ENCODE measurements at regions of chr10 and their contacts with region 1.

Region 1: GRCh38 chr10:110354322-110354766 is 49.6 kb upstream of the SMNDC1 start:
- DNase-seq: peak; percentile 94
- ATAC-seq: peak; percentile 39
- H3K4me3 Mint-ChIP-seq: peak overlapping the region; percentile 68
- H3K27ac Mint-ChIP-seq: peak overlapping the region; percentile 98
- H3K4me1 Mint-ChIP-seq: peaks cover 67% of the 10 kb centered on the region
- H3K27me3 Mint-ChIP-seq: no peaks in the 10 kb centered on the region

Region 2: DNA sequence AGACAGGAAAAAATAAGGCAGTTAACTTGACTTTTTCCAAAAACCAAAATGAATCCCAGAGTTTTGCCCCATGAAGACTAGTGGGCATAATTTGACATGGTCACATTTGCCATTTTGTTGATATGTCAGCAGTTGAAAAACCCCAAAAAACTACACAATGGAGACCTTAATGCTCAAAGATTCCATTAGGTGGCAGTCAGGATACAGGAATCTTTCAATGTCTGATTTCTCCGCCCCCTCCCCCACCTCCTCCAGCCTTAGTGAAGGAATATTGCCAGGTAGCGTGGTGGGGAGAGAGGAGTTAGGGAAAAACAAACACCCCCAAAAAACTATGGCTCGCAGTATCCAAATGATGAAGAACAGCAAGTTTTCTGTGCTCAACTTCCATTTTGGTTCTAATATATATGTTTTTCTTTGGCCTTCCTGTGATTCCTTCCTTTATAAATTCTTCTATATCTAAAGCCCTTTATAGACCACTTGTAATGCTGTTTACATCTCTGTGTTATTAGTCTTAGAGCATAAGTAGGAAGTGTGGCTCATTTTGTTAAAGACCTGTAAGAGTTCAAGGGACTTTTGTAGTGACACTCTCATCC is 42.9 kb before region 1 on chr10:
- CTCF ChIA-PET with region 1: interaction called, 14 read pairs
- POLR2A ChIA-PET with region 1: no interaction called
- intact Hi-C with region 1: loop called (anchors 1 to 2 kb)
- DNase-seq: peak; percentile 61
- ATAC-seq: peak; percentile 70
- H3K4me3 Mint-ChIP-seq: no peak overlapping the region
- H3K27ac Mint-ChIP-seq: no peak overlapping the region
- H3K4me1 Mint-ChIP-seq: peaks cover 27% of the 10 kb centered on the region
- H3K27me3 Mint-ChIP-seq: peaks cover 2% of the 10 kb centered on the region

Region 3: GRCh38 chr10:110368002-110368401 is 13.7 kb after region 1 on chr10:
- CTCF ChIA-PET with region 1: interaction called, 35 read pairs
- POLR2A ChIA-PET with region 1: interaction called, 8 read pairs
- intact Hi-C with region 1: no loop called
- DNase-seq: peak; percentile 27
- ATAC-seq: no peak
- H3K4me3 Mint-ChIP-seq: no peak overlapping the region
- H3K27ac Mint-ChIP-seq: no peak overlapping the region
- H3K4me1 Mint-ChIP-seq: peaks cover 70% of the 10 kb centered on the region
- H3K27me3 Mint-ChIP-seq: no peaks in the 10 kb centered on the region

Region 4: DNA sequence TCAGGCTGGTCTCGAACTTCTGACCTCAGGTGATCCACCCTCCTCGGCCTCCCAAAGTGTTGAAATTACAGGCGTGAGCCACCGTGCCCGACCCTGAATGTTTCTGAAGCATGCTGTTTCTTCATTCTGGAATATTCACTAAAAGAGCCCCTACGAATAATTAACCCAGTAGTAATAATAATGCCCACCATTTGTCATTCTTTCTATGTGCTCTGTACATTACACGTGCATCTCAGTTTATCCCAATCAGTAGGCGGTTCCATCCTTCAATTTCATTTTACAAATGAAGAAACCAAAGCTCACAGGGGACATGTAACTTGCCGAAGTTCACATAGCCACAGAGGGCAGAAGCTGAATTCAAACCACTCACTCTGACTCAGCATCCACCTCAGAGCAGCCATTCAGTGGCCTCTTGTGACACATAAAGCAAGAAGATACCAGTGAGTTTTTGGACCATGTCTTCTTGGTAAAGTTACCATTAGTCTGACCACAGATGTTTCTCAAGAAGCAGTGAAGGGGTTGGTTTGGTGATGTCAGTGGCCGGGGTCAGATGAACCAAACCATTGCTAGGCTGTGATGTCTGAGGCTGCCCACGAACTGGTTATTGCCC is 71.4 kb after region 1 on chr10:
- CTCF ChIA-PET with region 1: interaction called, 7 read pairs
- POLR2A ChIA-PET with region 1: interaction called, 7 read pairs
- intact Hi-C with region 1: loop called (anchors 1 kb)
- DNase-seq: peak; percentile 81
- ATAC-seq: peak; percentile 90
- H3K4me3 Mint-ChIP-seq: no peak overlapping the region
- H3K27ac Mint-ChIP-seq: peak overlapping the region; percentile 79
- H3K4me1 Mint-ChIP-seq: peaks cover 40% of the 10 kb centered on the region
- H3K27me3 Mint-ChIP-seq: no peaks in the 10 kb centered on the region

Region 5: DNA sequence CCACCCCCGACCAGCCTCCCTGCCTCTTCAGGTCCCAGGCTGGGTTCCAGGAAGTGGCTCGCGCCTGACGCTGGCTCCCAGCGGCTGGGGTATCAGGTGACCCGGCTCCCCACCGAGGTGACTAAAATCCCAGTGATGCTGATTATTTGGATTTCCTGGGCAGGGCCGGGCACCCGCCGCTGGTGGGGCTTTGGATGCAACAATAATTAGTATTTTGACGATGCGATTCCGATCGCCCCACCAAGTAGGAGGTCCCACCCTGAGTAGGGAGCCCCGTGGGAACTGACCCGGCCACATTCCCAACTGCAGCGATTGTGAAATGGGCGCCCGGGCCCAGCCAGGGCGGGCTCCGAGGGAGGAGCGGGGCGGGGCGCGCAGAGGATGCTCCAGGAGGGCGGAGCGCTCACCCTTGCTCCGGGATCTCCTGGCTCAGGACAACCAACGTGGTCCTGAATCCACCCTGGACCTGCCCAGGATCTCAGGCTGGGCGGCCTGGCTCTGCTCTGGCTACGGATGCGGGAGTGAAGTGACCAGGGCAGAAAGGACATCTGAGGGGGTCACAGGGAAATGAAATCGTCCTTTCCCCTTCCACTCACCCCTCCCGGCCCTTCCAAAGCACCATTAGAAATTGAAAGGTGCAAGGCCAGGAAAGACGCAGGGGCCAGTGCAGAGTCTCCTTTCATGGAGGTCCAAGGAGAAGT is 175.9 kb after region 1 on chr10:
- CTCF ChIA-PET with region 1: interaction called, 3 read pairs
- POLR2A ChIA-PET with region 1: no interaction called
- intact Hi-C with region 1: loop called in 1 of 2 experiments (anchors 1 kb)
- DNase-seq: peak; percentile 38
- ATAC-seq: no peak
- H3K4me3 Mint-ChIP-seq: no peak overlapping the region
- H3K27ac Mint-ChIP-seq: no peak overlapping the region
- H3K4me1 Mint-ChIP-seq: peaks cover 60% of the 10 kb centered on the region
- H3K27me3 Mint-ChIP-seq: peaks cover 3% of the 10 kb centered on the region

Region 6: GRCh38 chr10:110567201-110568054 is 213.1 kb after region 1 on chr10 and contains the start of gene SMC3:
- CTCF ChIA-PET with region 1: interaction called, 3 read pairs
- POLR2A ChIA-PET with region 1: no interaction called
- intact Hi-C with region 1: loop called in 1 of 2 experiments (anchors 1 kb)
- DNase-seq: peak; percentile 95
- ATAC-seq: peak; percentile 84
- H3K4me3 Mint-ChIP-seq: peak within 1 kb of the TSS; percentile 93
- H3K27ac Mint-ChIP-seq: peak within 1 kb of the TSS; percentile 99
- H3K4me1 Mint-ChIP-seq: peaks cover 35% of the 10 kb centered on the region
- H3K27me3 Mint-ChIP-seq: peaks cover 13% of the 10 kb centered on the region
- total RNA-seq, gene SMC3: 76.8 to 83.5 TPM

Measured in activated CD4-positive, alpha-beta T cell treated with anti-CD3 and anti-CD28 coated beads for 36 hours (primary cell).